Activated CD8-positive, alpha-beta T cell treated with anti-CD3 and anti-CD28 coated beads for 36 hours (primary cell): ENCODE measurements at regions of chr17 and their contacts with region 1.

Region 1: DNA sequence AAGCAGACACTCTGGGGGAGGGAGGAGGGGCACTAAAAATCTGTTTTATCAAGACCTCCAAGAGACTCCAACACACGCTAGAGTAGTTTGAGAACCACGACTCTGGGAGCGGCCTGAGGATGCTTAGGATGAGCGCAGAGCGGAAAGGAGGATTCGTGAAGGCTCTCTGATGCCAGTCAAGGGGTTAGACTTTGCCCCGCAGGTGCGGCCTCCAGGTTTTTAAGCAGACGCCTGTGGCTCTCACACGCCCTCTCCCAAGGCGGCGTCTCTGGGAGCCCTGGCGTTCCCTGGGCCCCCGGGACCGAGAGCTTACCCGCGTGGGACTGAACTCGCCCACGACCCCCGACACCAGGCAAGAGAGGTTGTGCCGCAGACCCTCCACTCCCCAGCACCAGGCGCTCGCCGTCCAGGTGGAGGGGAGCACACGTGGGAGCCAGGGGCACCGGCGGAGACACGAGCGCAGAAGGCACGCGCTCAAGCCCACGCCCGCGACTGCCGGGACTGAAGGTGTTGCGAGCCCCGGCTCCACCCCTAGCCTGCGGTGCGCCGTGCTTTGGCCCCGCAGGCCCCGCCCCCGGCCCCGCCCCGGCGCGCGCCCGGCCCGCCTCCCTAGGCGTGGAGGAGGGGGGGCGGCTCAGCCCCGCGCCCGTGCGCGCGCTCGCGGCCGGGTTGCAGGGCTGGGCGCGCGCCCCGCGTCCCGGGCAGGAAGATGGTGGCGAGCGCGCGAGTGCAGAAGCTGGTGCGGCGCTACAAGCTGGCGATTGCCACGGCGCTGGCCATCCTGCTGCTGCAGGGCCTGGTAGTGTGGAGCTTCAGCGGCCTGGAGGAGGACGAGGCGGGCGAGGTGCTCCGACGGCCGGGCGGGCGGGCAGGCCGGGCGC is at the start of gene XYLT2:
- DNase-seq: peak; percentile 91
- ATAC-seq: peak; percentile 93
- H3K4me3 Mint-ChIP-seq: peak within 1 kb of the TSS; percentile 91
- H3K27ac Mint-ChIP-seq: peak within 1 kb of the TSS; percentile 93
- H3K4me1 Mint-ChIP-seq: peaks cover 33% of the 10 kb centered on the region
- H3K27me3 Mint-ChIP-seq: no peaks in the 10 kb centered on the region
- CTCF ChIP-seq: no peak
- total RNA-seq, gene XYLT2: 24.4 to 25.3 TPM

Region 2: DNA sequence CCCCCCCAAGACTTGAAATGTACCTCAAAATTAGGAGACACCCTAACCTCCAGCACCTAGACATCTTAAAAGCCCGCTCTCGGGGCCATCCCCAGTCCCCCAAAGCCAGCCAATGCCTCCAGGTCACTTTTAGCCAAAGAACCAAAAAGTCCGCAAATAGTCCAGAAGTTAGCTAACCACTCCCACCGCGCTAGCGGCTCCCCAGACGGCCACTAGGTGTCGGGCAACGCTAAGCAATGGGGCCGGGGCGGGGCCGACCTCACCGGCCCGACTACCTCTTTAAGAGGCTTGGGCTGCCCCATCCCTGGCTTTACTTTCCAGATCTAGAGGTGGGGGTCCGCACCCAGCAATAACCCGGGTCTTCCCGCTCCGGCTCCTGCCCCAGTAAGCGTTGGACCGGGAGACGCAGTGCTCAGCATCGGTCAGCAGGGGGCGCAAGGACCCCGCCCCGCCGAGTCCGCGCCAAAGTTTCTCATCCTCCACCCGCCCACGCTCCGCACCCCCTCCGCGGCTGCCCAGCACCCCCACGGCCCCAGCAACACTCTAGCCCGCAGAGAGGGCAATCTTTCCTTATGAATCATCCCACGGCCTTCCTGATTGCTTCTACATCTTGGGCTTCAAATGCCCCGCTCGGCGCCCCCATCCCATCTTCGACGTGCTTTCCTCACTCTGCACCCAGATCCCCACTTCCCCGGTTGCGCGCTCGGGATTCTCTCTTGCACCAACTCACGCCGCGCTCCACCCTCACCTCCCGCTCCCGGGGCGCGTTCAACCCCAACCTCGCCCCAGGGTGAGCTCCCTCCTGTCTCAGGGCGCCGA is 145.0 kb before region 1 on chr17:
- CTCF ChIA-PET with region 1: no interaction called
- POLR2A ChIA-PET with region 1: no interaction called
- intact Hi-C with region 1: no loop called
- DNase-seq: peak; percentile 90
- ATAC-seq: peak; percentile 78
- H3K4me3 Mint-ChIP-seq: peak overlapping the region; percentile 67
- H3K27ac Mint-ChIP-seq: no peak overlapping the region
- H3K4me1 Mint-ChIP-seq: peaks cover 20% of the 10 kb centered on the region
- H3K27me3 Mint-ChIP-seq: peaks cover 47% of the 10 kb centered on the region
- CTCF ChIP-seq: peak; percentile 100

Region 3: GRCh38 chr17:50372758-50373556 is 27.3 kb after region 1 on chr17 and contains the starts of genes EME1 and MRPL27:
- CTCF ChIA-PET with region 1: no interaction called
- POLR2A ChIA-PET with region 1: interaction called, 27 read pairs
- intact Hi-C with region 1: no loop called
- DNase-seq: peak; percentile 91
- ATAC-seq: peak; percentile 95
- H3K4me3 Mint-ChIP-seq: peak within 1 kb of the TSS; percentile 94
- H3K27ac Mint-ChIP-seq: peak within 1 kb of the TSS; percentile 98
- H3K4me1 Mint-ChIP-seq: peaks cover 21% of the 10 kb centered on the region
- H3K27me3 Mint-ChIP-seq: no peaks in the 10 kb centered on the region
- CTCF ChIP-seq: no peak
- total RNA-seq, gene EME1: 48.0 to 48.6 TPM
- total RNA-seq, gene MRPL27: 54.6 to 55.8 TPM